Thyroid gland (tissue), 4 donors: ENCODE measurements at regions of chr19 and their contacts with region 1.

Region 1: GRCh38 chr19:50264483-50265186 is 61.2 kb downstream of the MYH14 start:
- DNase-seq: no peak
- H3K4me3 ChIP-seq: no peak overlapping the region
- H3K27ac ChIP-seq: no peak overlapping the region
- H3K4me1 ChIP-seq: no peaks in the 10 kb centered on the region
- H3K27me3 ChIP-seq: no peaks in the 10 kb centered on the region
- CTCF ChIP-seq: no peak
- POLR2A ChIP-seq: no peak

Region 2: GRCh38 chr19:50300814-50301606 is 36.4 kb after region 1 on chr19:
- intact Hi-C with region 1: loop called (anchors 5 kb)
- DNase-seq: no peak
- H3K4me3 ChIP-seq: no peak overlapping the region
- H3K27ac ChIP-seq: no peak overlapping the region
- H3K4me1 ChIP-seq: no peaks in the 10 kb centered on the region
- H3K27me3 ChIP-seq: no peaks in the 10 kb centered on the region
- CTCF ChIP-seq: no peak
- POLR2A ChIP-seq: no peak